RWPE1 (cell line): ENCODE measurements at regions of chr5 and their contacts with region 1.

Region 1: GRCh38 chr5:157761690-157762621 is 18.4 kb downstream of the LSM11 start:
- DNase-seq: peak; percentile 71
- H3K27ac ChIP-seq: no peak overlapping the region
- CTCF ChIP-seq: peak; percentile 87

Region 2: DNA sequence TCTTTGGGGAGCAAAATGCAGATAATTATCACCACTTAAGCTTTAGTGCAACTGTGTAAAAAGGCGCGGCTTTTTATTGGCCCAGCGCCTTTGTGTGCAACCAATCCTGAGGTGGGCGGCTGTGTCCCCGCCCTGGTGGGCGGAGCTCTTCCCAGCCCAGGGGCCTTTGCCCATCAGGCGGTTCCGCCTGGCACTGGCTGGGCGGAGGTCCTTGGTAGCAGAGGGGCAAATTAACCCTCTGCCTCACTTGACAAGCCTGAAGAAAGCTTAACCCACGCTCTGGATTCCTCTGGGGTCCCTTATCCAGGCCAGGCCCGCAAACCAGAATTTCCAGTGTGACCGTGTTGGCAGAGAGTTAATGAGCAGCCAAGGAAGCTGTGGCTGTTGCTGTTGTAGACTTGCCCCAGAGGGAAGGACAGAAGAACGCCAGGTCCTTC is 314.7 kb before region 1 on chr5:
- CTCF ChIA-PET with region 1: no interaction called
- POLR2A ChIA-PET with region 1: interaction called, 10 read pairs
- DNase-seq: no peak
- H3K27ac ChIP-seq: no peak overlapping the region
- CTCF ChIP-seq: no peak